WTC11 (cell line): ENCODE measurements at regions of chr4 and their contacts with region 1.

Region 1: GRCh38 chr4:153750197-153750817 is 9.5 kb downstream of the RNF175 start:
- DNase-seq: peak; percentile 68
- ATAC-seq: peak; percentile 95
- H3K4me3 Mint-ChIP-seq: no peak overlapping the region
- H3K27ac Mint-ChIP-seq: no peak overlapping the region
- H3K4me1 Mint-ChIP-seq: no peaks in the 10 kb centered on the region
- H3K27me3 Mint-ChIP-seq: no peaks in the 10 kb centered on the region
- CTCF ChIP-seq: peak; percentile 53

Region 2: GRCh38 chr4:153643406-153644383 is 106.6 kb before region 1 on chr4:
- CTCF ChIA-PET with region 1: interaction called, 12 read pairs
- POLR2A ChIA-PET with region 1: no interaction called
- DNase-seq: no peak
- ATAC-seq: no peak
- H3K4me3 Mint-ChIP-seq: no peak overlapping the region
- H3K27ac Mint-ChIP-seq: no peak overlapping the region
- H3K4me1 Mint-ChIP-seq: peaks cover 16% of the 10 kb centered on the region
- H3K27me3 Mint-ChIP-seq: no peaks in the 10 kb centered on the region
- CTCF ChIP-seq: no peak

Region 3: DNA sequence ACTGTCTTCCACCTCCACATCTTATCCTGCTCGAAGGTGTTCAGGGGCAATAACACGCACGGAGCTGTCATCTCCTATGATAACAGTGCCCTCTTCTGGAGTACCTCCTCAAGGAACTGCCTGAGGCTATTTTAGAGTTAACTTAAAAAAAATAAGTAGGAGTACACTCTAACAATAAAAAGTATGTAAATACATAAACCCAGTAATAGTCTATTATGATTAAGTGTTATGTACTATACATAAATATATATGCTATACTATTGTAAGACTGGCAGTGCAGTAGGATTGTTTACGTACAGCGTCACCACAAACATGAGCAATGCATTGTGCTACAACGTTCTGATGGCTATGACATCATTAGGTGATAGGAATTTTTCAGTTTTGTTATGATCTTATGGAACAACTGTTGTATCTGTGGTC is 100.7 kb before region 1 on chr4:
- CTCF ChIA-PET with region 1: interaction called, 16 read pairs
- POLR2A ChIA-PET with region 1: no interaction called
- DNase-seq: peak; percentile 19
- ATAC-seq: no peak
- H3K4me3 Mint-ChIP-seq: no peak overlapping the region
- H3K27ac Mint-ChIP-seq: no peak overlapping the region
- H3K4me1 Mint-ChIP-seq: peaks cover 23% of the 10 kb centered on the region
- H3K27me3 Mint-ChIP-seq: no peaks in the 10 kb centered on the region
- CTCF ChIP-seq: no peak

Region 4: DNA sequence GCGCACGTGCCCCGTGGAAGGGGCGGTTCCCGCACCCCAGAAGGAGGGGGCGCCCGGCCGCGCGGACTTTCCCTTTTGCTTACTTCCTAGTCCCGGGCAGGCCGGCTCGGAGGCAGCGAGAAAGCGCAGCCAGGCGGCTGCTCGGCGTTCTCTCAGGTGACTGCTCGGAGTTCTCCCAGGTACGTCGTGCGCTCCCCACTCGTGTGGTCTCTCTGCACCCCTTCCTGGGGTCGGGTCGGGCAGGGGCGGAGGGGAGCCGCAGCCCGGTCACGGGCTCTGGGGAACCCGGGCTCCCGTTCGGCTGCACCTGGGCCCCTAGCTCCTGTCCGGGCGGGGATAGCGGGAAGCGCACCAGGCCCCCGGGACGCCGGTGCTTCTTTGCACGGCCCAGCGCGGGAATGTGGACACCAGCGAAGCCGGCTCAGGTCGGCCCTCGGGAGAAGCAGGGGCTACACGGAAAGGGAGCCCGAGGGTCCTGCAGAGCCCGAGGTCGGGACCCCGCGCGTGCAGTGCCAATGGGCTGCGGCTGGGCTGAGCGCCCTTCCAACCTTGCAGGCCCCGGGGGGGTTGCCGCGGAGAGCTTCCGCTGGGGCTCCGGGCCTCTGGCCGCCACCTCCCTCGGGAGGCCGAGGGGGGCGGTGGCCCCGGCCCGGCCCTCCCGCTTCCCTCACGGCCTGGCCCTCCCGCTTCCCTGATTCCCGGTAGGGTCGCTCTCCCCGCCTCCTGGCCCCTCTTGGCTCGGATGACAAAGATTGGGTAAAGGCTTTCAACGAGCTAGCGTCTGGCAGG is 65.9 kb before region 1 on chr4 and contains the start of gene TLR2:
- CTCF ChIA-PET with region 1: interaction called, 16 read pairs
- POLR2A ChIA-PET with region 1: no interaction called
- DNase-seq: peak; percentile 66
- ATAC-seq: peak; percentile 83
- H3K4me3 Mint-ChIP-seq: peak within 1 kb of the TSS; percentile 77
- H3K27ac Mint-ChIP-seq: no peak within 1 kb of the TSS
- H3K4me1 Mint-ChIP-seq: peaks cover 11% of the 10 kb centered on the region
- H3K27me3 Mint-ChIP-seq: peaks cover 64% of the 10 kb centered on the region
- CTCF ChIP-seq: no peak
- total RNA-seq, gene TLR2: 1.3 to 1.7 TPM (median 1.4 TPM) in 3 replicates